Activated T-helper 2 cell treated with anti-CD3 and anti-CD28 coated beads, Interferon-gamma antibody, Interleukin-2, Interleukin-4, amounts not matched to agents 10 μg/mL and 5 μg/mL and 100 μg/mL, durations not matched to agents 14 hours and 24 hours and 36 hours (primary cell): ENCODE measurements at regions of chr3 and their contacts with region 1.

Region 1: GRCh38 chr3:16309558-16309957 is 44.5 kb downstream of the OXNAD1 start:
- DNase-seq: peak; percentile 56
- H3K4me3 Mint-ChIP-seq: peak overlapping the region; percentile 60
- H3K27ac Mint-ChIP-seq: peak overlapping the region; percentile 91
- H3K4me1 Mint-ChIP-seq: peaks cover 80% of the 10 kb centered on the region
- H3K27me3 Mint-ChIP-seq: no peaks in the 10 kb centered on the region

Region 2: DNA sequence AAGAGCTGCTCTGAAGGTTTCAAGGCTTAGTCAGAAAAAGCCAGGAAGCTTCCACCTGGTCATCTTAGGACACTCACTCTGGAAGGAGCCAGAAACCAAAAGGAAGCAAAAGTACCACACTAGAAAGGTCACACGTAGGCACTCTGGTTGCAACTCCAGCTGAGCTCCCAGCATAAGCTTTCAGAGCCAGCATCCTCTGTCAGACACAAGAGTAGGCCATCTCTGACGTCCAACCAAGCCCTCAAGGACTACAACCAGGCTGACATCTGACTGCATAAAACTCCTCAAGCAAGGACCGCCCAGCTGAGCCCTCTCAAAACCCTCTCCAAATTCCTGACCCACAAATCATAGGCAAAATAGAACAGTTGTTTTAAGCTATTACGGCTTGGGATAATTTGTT is 990.0 kb before region 1 on chr3:
- intact Hi-C with region 1: loop called (anchors 10 kb)
- DNase-seq: no peak
- H3K4me3 Mint-ChIP-seq: no peak overlapping the region
- H3K27ac Mint-ChIP-seq: no peak overlapping the region
- H3K4me1 Mint-ChIP-seq: peaks cover 40% of the 10 kb centered on the region
- H3K27me3 Mint-ChIP-seq: no peaks in the 10 kb centered on the region

Region 3: DNA sequence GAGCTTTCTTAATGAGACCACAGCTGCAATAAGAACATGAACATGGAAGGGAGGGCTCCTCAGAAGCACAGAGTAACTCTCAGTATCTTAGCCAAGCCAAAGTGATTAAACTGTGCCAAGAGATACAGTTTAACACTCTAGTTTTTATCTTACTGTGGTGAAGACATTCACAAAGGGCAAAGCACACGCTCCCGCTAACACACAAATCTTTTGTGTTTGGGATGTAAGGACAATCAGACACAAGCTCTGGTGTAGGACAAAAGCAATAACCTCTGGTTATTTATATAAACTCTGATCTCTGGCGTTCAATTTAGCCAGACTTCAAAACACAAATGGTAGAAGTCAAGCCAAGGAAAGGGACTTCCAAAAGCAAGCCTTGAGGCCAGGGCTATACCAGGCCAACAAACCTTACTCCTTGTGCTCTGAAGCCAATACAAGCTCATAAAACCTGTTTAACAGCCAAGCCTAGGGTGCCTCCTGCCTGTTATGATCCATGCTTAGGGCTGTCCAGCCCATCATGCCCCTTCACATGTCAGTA is 72.6 kb before region 1 on chr3:
- intact Hi-C with region 1: no loop called
- DNase-seq: no peak
- H3K4me3 Mint-ChIP-seq: no peak overlapping the region
- H3K27ac Mint-ChIP-seq: no peak overlapping the region
- H3K4me1 Mint-ChIP-seq: no peaks in the 10 kb centered on the region
- H3K27me3 Mint-ChIP-seq: no peaks in the 10 kb centered on the region

Region 4: DNA sequence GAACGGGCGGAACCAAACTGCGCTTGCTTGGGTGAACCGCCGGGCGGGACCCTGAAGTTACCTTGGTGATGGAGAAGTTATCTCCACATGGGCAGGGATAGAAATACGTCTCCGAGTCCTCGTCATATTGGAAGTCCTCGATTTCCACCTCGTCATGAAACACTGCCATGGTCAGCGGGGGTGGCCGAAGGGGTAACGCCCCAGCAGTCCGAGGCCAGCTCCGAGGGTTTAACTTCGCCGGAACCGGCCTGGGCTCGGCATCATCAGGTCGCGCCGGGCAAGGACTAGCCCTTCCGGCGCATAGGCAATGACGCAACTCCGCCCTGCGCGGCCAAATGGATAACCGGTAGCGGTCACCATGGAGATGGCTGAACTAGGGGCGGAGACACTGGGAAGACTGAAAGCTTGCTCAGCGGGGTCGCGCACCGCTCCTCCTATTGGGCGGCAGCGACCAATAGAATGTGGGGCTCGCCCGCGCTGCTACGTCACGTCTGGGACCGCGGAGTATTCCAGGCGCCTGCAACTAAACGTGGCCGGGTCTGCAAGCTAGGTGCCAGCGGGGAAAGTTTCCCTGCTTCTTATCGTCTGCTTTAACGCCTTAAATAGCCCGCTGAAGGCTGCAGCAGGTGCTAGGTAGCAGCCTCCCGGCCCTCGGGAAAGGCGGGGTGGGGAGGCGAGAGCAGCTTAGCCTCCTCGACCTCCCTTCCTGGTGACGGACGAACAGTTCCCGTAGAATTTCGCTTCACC is 44.7 kb before region 1 on chr3 and contains the starts of genes DPH3 and OXNAD1:
- intact Hi-C with region 1: loop called (anchors 2 kb)
- DNase-seq: peak; percentile 99
- H3K4me3 Mint-ChIP-seq: peak within 1 kb of the TSS; percentile 96
- H3K27ac Mint-ChIP-seq: peak within 1 kb of the TSS; percentile 95
- H3K4me1 Mint-ChIP-seq: peaks cover 20% of the 10 kb centered on the region
- H3K27me3 Mint-ChIP-seq: no peaks in the 10 kb centered on the region
- total RNA-seq, gene DPH3: 22.7 and 23.1 TPM in 2 replicates
- total RNA-seq, gene OXNAD1: 18.7 and 20.5 TPM in 2 replicates

Region 5: DNA sequence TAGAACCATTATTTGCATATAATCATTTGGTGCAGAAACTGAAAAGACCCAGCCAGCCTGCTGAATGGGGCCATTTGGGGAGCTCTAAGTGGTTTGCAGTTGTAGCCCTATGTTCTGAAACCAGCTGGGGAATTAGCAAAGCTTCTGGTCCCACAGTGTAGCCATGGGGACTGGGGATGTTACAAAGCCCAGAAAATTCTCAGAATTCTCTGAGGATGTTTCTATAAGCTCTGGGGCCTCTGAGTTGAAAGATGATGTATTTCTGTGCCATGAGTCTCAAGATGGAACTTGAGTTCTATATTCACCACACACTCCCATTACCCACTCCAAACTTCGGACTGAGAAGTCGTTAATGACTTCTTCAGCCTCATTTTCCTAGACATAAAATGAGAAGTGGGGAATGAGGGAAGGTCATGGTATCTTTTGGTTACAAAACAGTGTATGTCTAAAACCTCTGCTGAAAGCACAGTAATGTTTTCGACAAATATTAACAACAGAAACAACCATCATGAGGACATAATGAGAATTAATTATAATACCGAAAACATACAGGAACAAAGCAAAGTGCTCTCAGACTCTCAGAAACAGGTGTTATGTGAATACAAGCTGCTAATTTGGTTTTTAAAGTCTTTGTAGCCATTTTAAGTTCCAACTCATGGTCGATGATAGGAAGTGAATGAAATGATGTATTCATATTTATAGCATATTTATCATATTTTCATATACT is 114.6 kb after region 1 on chr3:
- intact Hi-C with region 1: no loop called
- DNase-seq: no peak
- H3K4me3 Mint-ChIP-seq: no peak overlapping the region
- H3K27ac Mint-ChIP-seq: no peak overlapping the region
- H3K4me1 Mint-ChIP-seq: peaks cover 4% of the 10 kb centered on the region
- H3K27me3 Mint-ChIP-seq: no peaks in the 10 kb centered on the region

Region 6: DNA sequence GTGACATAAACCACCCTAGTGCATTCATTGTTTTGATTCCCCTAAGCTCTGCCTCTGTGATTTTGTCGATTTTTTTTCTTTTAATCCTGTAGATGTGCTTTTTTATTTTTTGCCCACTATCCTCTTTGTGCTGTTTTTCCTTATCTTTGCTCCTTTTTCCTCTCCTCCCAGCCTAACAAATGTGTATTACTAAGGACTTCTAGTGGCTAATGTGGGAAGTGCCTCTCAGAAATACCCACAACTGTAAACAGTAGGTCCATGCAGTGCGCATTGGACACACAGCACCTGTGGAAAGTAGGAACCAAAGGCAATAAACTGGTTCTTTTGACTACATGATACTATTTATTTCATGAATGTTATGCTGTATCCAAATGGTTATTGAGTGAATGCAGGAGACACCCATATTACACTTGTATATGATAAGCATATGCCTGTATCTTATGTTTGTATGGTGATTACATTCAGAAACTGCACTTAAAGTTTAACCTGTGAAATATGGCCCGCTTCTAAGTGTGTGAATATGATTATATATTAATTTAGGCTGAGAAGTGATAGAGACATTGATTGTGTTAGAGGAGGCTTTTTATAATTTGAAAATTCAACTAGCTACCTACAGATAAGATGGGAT is 723.0 kb after region 1 on chr3:
- intact Hi-C with region 1: loop called (anchors 10 kb)
- DNase-seq: no peak
- H3K4me3 Mint-ChIP-seq: no peak overlapping the region
- H3K27ac Mint-ChIP-seq: no peak overlapping the region
- H3K4me1 Mint-ChIP-seq: peaks cover 60% of the 10 kb centered on the region
- H3K27me3 Mint-ChIP-seq: no peaks in the 10 kb centered on the region

Region 7: GRCh38 chr3:17742108-17742879 is 1432.7 kb after region 1 on chr3 and contains the start of gene TBC1D5:
- intact Hi-C with region 1: loop called (anchors 5 kb)
- DNase-seq: peak; percentile 93
- H3K4me3 Mint-ChIP-seq: peak within 1 kb of the TSS; percentile 93
- H3K27ac Mint-ChIP-seq: peak within 1 kb of the TSS; percentile 98
- H3K4me1 Mint-ChIP-seq: peaks cover 40% of the 10 kb centered on the region
- H3K27me3 Mint-ChIP-seq: no peaks in the 10 kb centered on the region
- total RNA-seq, gene TBC1D5: 40.2 and 43.9 TPM in 2 replicates